GM12878 (cell line): ENCODE measurements at regions of chr1 and their contacts with region 1.

Region 1: GRCh38 chr1:226786550-226786949 is 47.5 kb upstream of the ITPKB start:
- DNase-seq: peak; percentile 70
- ATAC-seq: peak; percentile 87
- H3K4me3 ChIP-seq: no peak overlapping the region
- H3K27ac ChIP-seq: peak overlapping the region; percentile 64; the same call in 1 of the 2 replicates
- H3K4me1 ChIP-seq: peaks cover 53% of the 10 kb centered on the region
- H3K27me3 ChIP-seq: no peaks in the 10 kb centered on the region
- CTCF ChIP-seq: no peak
- EP300 ChIP-seq: no peak
- POLR2A ChIP-seq: no peak
- RAD21 ChIP-seq: peak; percentile 23; the same call in 1 of the 2 replicates

Region 2: GRCh38 chr1:226575739-226576378 is 210.7 kb before region 1 on chr1:
- CTCF ChIA-PET with region 1: no interaction called
- POLR2A ChIA-PET with region 1: no interaction called
- RAD21 ChIA-PET with region 1: no interaction called
- SMC1A ChIA-PET with region 1: no interaction called
- in situ Hi-C with region 1: no loop called
- intact Hi-C with region 1: no loop called
- DNase-seq: no peak
- ATAC-seq: no peak
- H3K4me3 ChIP-seq: no peak overlapping the region
- H3K27ac ChIP-seq: no peak overlapping the region
- H3K4me1 ChIP-seq: no peaks in the 10 kb centered on the region
- H3K27me3 ChIP-seq: peaks cover 0 to 2% of the 10 kb centered on the region in 2 experiments; a peak in 1 of 4 replicates
- CTCF ChIP-seq: no peak
- EP300 ChIP-seq: no peak
- POLR2A ChIP-seq: no peak
- RAD21 ChIP-seq: no peak

Region 3: GRCh38 chr1:226798427-226799411 is 12.2 kb after region 1 on chr1:
- CTCF ChIA-PET with region 1: no interaction called
- POLR2A ChIA-PET with region 1: interaction called, 3 read pairs
- RAD21 ChIA-PET with region 1: interaction called, 3 read pairs
- SMC1A ChIA-PET with region 1: interaction called, 13 read pairs
- in situ Hi-C with region 1: no loop called
- intact Hi-C with region 1: no loop called
- DNase-seq: peak; percentile 47
- ATAC-seq: peak; percentile 86
- H3K4me3 ChIP-seq: no peak overlapping the region
- H3K27ac ChIP-seq: peak overlapping the region; percentile 66
- H3K4me1 ChIP-seq: peaks cover 24% of the 10 kb centered on the region
- H3K27me3 ChIP-seq: no peaks in the 10 kb centered on the region
- CTCF ChIP-seq: no peak
- EP300 ChIP-seq: no peak
- POLR2A ChIP-seq: 0 out of 2 replicates have a peak, but pooled peaks have one; percentile 27
- RAD21 ChIP-seq: no peak

Region 4: GRCh38 chr1:226940029-226940805 is 153.7 kb after region 1 on chr1 and contains the start of gene COQ8A:
- CTCF ChIA-PET with region 1: no interaction called
- POLR2A ChIA-PET with region 1: no interaction called
- RAD21 ChIA-PET with region 1: no interaction called
- SMC1A ChIA-PET with region 1: no interaction called
- in situ Hi-C with region 1: no loop called
- intact Hi-C with region 1: no loop called
- DNase-seq: peak; percentile 97
- ATAC-seq: peak; percentile 98
- H3K4me3 ChIP-seq: peak within 1 kb of the TSS; percentile 76
- H3K27ac ChIP-seq: peak within 1 kb of the TSS; percentile 83
- H3K4me1 ChIP-seq: peaks cover 5% of the 10 kb centered on the region; the same call in 1 of the 2 replicates
- H3K27me3 ChIP-seq: no peaks in the 10 kb centered on the region
- CTCF ChIP-seq: no peak
- EP300 ChIP-seq: no peak
- POLR2A ChIP-seq: no peak; the same call in 1 of the 2 replicates
- RAD21 ChIP-seq: no peak
- polyA plus RNA-seq, gene COQ8A: 0.72 to 1.9 TPM

Region 5: DNA sequence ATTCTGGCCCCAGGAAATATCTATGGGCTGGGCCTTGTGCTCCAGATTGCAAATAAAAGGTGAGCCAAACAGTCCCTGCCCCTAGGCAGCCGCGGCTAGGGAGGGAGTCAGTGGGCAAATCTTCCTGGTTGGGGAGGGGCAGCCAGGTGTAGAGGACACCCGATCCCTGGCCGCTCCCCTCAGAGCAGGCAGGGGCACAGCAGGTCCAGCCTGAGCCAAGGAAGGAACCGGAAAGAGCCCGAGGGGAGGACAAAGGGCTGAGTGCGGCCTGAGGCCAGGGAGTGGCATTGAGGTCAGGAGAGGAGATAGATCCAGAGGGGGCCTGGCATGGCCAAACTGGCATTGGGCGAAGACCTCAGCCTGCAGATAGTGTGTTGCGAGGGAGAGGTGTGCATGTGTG is 1259.3 kb after region 1 on chr1:
- CTCF ChIA-PET with region 1: no interaction called
- POLR2A ChIA-PET with region 1: interaction called, 11 read pairs
- RAD21 ChIA-PET with region 1: no interaction called
- SMC1A ChIA-PET with region 1: no interaction called
- in situ Hi-C with region 1: no loop called
- intact Hi-C with region 1: no loop called
- DNase-seq: no peak
- ATAC-seq: no peak
- H3K4me3 ChIP-seq: no peak overlapping the region
- H3K27ac ChIP-seq: no peak overlapping the region
- H3K4me1 ChIP-seq: no peaks in the 10 kb centered on the region
- H3K27me3 ChIP-seq: peaks cover 0 to 5% of the 10 kb centered on the region in 2 experiments; a peak in 2 of 4 replicates
- CTCF ChIP-seq: no peak
- EP300 ChIP-seq: no peak
- POLR2A ChIP-seq: no peak
- RAD21 ChIP-seq: no peak